Mammary epithelial cell (primary cell): ENCODE measurements at regions of chr6 and their contacts with region 1.

Region 1: DNA sequence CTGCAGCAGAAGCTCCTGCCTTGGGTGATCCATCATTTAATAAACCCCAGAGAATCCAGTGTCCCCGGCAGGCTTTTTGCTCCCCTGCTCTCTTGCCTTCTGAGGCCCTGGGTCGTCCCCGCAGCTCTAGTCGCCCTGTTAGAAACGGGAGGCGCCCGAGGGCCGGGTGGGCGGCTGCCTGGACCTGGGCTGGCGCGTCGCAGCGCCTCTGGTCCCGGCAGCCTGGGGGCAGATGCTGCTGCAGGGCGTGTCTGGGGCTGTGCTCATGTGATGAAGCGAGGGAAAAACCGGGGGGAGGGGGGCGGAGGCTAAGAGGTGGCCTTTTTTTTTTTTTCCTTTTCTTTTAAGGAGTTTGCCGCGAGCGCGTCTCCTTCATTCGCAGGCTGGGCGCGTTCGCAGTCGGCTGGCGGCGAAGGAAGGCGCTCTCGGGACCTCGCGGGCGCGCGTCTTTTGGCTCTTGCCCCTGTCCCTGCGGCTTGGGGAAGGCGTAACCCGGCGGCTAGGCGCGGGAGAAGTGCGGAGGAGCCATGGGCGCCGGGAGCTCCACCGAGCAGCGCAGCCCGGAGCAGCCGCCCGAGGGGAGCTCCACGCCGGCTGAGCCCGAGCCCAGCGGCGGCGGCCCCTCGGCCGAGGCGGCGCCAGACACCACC is 394 bp downstream of the AKAP12 start:
- DNase-seq: peak; percentile 45
- H3K4me3 ChIP-seq: peak overlapping the region; percentile 60 to 77 (median 76)
- H3K27ac ChIP-seq: no peak overlapping the region
- H3K4me1 ChIP-seq: no peaks in the 10 kb centered on the region
- H3K27me3 ChIP-seq: no peaks in the 10 kb centered on the region
- CTCF ChIP-seq: no peak

Region 2: GRCh38 chr6:150959166-150959565 is 281.0 kb before region 1 on chr6:
- CTCF ChIA-PET with region 1: no interaction called
- dilution Hi-C with region 1: no loop called
- in situ Hi-C with region 1: no loop called
- intact Hi-C with region 1: no loop called
- DNase-seq: no peak
- H3K4me3 ChIP-seq: no peak overlapping the region
- H3K27ac ChIP-seq: no peak overlapping the region
- H3K4me1 ChIP-seq: no peaks in the 10 kb centered on the region
- H3K27me3 ChIP-seq: no peaks in the 10 kb centered on the region
- CTCF ChIP-seq: no peak

Region 3: DNA sequence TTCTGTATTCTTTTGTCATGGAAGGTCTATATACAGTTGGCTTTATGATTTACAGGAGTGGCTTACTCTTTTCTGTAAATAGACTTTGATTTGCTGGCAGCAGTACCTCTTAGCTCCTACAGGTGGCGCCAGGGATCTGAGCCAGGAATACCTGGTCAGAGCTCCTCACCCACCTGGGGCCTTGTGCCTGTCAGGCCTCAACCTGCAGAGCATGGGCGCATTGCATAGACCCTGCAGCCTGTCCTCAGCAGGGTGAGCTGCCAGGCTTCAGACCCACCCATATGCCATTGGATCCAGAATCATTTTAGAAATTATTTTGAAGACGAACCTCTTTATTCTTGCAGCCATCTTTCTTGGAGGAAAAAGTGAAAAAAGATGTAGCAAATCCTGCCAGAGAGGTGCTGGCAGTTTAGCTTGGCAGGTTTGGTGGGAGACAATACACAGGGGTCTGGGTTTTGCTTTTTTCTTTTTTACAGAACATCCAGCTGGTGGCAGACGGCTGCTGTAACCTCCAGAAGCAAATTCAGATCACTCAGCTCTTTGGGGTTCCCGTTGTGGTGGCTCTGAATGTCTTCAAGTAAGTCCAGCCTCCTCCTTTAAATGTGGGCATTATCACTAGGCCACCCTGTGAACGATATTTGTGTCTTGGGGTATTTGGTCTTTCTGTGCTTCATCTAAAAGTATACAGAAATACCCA is 225.6 kb before region 1 on chr6:
- CTCF ChIA-PET with region 1: no interaction called
- dilution Hi-C with region 1: no loop called
- in situ Hi-C with region 1: no loop called
- intact Hi-C with region 1: loop called (anchors 1 kb)
- DNase-seq: peak; percentile 53
- H3K4me3 ChIP-seq: no peak overlapping the region
- H3K27ac ChIP-seq: no peak overlapping the region
- H3K4me1 ChIP-seq: no peaks in the 10 kb centered on the region
- H3K27me3 ChIP-seq: no peaks in the 10 kb centered on the region
- CTCF ChIP-seq: peak; percentile 99

Region 4: DNA sequence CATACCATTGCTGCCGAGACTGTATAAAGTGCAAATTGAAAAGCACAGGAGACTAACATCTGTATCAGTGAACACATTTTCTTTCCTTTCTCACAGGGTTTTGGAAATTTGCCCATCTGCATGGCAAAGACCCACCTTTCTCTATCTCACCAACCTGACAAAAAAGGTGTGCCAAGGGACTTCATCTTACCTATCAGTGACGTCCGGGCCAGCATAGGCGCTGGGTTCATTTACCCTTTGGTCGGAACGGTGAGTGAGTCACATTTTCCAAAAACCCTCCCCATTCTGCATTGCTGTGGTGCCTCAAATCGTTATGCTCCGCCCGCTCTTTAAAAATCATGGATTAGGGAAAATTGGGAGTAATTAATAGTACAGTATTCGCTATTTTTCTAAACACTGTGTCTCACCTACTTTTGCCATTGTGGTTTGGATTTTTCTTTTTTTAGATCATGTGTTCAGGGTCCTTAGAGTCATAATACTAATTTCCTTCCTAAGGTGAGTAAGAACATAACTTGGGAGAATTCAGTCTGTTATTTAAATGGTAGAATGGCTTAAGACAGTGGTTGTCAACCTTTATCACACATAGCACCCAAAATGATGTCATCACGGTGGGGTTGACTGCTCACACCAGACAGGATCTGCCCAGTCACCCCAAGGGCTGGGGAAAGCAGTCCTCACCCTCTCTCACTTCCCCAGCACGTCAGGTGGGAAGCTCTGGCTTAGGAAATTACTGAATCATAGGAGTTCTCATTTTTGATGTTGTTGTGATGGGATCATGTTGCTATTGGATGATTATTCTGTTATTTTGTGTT is 203.1 kb before region 1 on chr6:
- CTCF ChIA-PET with region 1: no interaction called
- dilution Hi-C with region 1: no loop called
- in situ Hi-C with region 1: no loop called
- intact Hi-C with region 1: loop called (anchors 2 kb)
- DNase-seq: peak; percentile 81
- H3K4me3 ChIP-seq: no peak overlapping the region
- H3K27ac ChIP-seq: peak overlapping the region; percentile 94
- H3K4me1 ChIP-seq: peaks cover 41% of the 10 kb centered on the region
- H3K27me3 ChIP-seq: no peaks in the 10 kb centered on the region
- CTCF ChIP-seq: no peak

Region 5: GRCh38 chr6:151082079-151082478 is 158.1 kb before region 1 on chr6:
- CTCF ChIA-PET with region 1: interaction called, 17 read pairs
- dilution Hi-C with region 1: no loop called
- in situ Hi-C with region 1: no loop called
- intact Hi-C with region 1: no loop called
- DNase-seq: peak; percentile 64
- H3K4me3 ChIP-seq: no peak overlapping the region
- H3K27ac ChIP-seq: peak overlapping the region; percentile 62
- H3K4me1 ChIP-seq: peaks cover 20% of the 10 kb centered on the region
- H3K27me3 ChIP-seq: no peaks in the 10 kb centered on the region
- CTCF ChIP-seq: no peak

Region 6: DNA sequence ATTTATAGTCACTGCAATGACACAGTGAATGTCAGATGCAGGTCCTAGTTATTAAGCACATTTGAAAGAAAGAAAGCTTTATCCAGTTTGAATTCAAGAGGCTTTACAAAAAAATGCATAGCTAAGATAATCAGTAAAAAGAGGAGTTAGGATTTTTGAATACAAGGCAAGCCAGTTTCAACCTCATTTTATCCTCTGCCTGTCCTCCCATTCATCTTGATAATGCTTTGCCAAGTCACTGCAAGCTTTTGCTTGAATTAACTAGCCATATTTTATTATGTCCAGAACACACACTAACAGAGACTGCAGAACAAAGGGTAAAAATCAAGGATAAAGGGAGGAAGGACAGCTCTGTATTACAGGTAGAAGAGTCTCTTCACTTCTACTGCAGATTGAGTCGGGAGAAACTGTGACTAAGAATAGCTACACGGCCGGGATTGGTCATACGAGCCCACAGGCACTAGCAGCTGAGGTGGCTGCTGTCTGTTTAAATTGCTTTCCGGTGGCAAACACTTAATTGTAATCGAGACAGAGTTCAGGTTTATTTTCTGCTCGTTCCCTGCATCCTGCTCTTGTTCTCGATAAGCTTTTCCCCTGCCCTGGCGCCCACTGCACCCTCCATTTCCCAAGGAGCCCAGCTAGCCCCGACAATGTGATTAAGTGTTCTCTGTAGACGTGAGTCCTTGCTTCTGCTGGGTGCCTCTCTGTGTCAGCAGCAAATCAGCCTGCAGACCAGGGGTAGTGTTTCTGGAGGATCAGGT is 30.9 kb before region 1 on chr6:
- CTCF ChIA-PET with region 1: no interaction called
- dilution Hi-C with region 1: loop called (anchors 5 kb)
- in situ Hi-C with region 1: no loop called
- intact Hi-C with region 1: no loop called
- DNase-seq: peak; percentile 75
- H3K4me3 ChIP-seq: no peak overlapping the region
- H3K27ac ChIP-seq: no peak overlapping the region
- H3K4me1 ChIP-seq: peaks cover 4% of the 10 kb centered on the region
- H3K27me3 ChIP-seq: no peaks in the 10 kb centered on the region
- CTCF ChIP-seq: no peak